H1 (cell line): ENCODE measurements at regions of chr15 and their contacts with region 1.

Region 1: GRCh38 chr15:51162865-51163762 is 68.4 kb upstream of the TNFAIP8L3 start:
- DNase-seq: peak; percentile 29 to 86
- H3K4me3 ChIP-seq: no peak overlapping the region
- H3K27ac ChIP-seq: no peak overlapping the region
- H3K4me1 ChIP-seq: peaks cover 0 to 8% (median under 1%) of the 10 kb centered on the region in 4 experiments; a peak in 3 of 7 replicates
- H3K27me3 ChIP-seq: 0 out of 7 replicates have a peak, but pooled peaks cover 0 to 2% (median 0%) of the 10 kb centered on the region in 4 experiments
- CTCF ChIP-seq: peak; percentile 84 to 88 (median 87)
- EP300 ChIP-seq: no peak
- POLR2A ChIP-seq: no peak
- RAD21 ChIP-seq: peak; percentile 81 to 87

Region 2: DNA sequence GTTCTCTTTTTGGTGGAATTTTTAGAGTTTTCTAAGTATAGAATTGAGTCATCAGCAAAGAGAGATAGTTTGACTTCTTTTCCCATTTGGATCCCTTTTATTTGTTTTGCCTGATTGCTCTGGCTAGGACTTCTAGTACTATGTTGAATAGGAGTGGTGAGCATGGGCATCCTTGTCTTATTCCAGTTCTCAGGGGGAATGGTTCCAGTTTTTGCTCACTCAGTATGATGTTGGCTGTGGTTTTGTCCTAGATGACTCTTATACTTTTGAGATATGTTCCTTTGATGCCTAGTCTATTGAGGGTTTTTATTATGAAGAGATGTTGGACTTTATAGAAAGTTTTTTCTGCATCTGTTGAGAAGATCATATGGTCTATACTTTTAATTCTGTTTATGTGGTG is 140.9 kb before region 1 on chr15:
- CTCF ChIA-PET with region 1: no interaction called
- POLR2A ChIA-PET with region 1: no interaction called
- DNase-seq: no peak
- H3K4me3 ChIP-seq: no peak overlapping the region
- H3K27ac ChIP-seq: no peak overlapping the region
- H3K4me1 ChIP-seq: no peaks in the 10 kb centered on the region
- H3K27me3 ChIP-seq: no peaks in the 10 kb centered on the region
- CTCF ChIP-seq: no peak
- EP300 ChIP-seq: no peak
- POLR2A ChIP-seq: no peak
- RAD21 ChIP-seq: no peak

Region 3: DNA sequence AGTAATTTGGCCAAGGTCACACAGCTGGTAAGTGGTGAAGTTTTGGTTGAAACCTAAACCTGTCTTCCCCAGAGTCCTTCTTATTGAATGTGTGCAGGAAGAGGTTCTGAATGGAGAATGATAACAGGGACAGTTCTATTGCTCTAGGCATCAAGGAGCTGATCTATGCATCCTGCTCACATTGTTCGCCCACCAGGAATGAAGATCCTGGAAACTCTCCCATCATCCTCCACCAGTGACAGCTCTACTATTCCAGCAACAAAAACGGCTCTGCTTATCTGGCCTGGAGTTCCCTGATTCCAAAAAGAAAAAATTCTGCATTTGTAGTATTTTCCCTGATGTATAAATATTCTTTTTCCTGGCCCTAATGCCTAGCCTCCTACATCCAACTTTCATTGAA is 52.1 kb before region 1 on chr15:
- CTCF ChIA-PET with region 1: no interaction called
- POLR2A ChIA-PET with region 1: no interaction called
- DNase-seq: no peak
- H3K4me3 ChIP-seq: no peak overlapping the region
- H3K27ac ChIP-seq: no peak overlapping the region
- H3K4me1 ChIP-seq: no peaks in the 10 kb centered on the region
- H3K27me3 ChIP-seq: no peaks in the 10 kb centered on the region
- CTCF ChIP-seq: no peak
- EP300 ChIP-seq: no peak
- POLR2A ChIP-seq: no peak
- RAD21 ChIP-seq: no peak

Region 4: GRCh38 chr15:51144021-51144532 is 19.0 kb before region 1 on chr15:
- CTCF ChIA-PET with region 1: interaction called, 58 read pairs
- POLR2A ChIA-PET with region 1: no interaction called
- DNase-seq: no peak
- H3K4me3 ChIP-seq: no peak overlapping the region
- H3K27ac ChIP-seq: no peak overlapping the region
- H3K4me1 ChIP-seq: no peaks in the 10 kb centered on the region
- H3K27me3 ChIP-seq: no peaks in the 10 kb centered on the region
- CTCF ChIP-seq: no peak
- EP300 ChIP-seq: no peak
- POLR2A ChIP-seq: no peak
- RAD21 ChIP-seq: no peak

Region 5: DNA sequence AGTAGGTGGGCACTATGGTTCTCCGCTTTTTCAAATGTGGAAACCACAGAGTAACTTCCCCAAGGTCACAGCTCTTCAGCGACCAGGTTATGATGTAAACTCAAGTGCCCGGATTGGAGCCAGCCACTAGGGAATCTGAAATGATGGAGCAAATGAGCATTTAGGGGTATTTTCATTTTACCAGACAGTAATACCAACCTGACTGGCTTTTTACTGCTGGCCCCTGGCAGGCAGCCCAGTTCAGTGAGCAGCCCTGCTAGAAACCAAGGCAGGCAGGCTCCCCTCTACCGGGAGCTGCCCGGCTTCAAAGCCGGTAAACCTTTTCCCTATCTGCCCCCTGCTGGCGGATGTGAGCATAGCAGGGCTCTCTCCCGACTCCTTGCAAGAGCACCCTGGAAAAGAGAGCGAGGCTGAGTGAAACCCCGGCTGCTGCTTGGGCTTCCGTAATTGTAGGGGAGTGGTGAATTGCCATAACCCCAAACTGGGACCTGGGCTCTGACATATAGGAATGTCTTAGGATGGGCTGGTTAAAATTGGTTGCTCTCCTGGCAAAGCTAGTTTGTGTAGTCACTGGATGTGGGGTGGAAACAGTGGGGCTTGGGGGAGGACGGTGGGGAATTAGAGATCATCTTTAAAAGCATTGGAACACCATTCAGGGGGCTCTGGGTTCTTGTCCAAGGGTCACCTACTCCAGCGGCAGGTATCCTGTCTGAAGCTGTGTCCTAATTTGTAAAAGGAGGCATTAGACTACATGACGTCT is 29.6 kb after region 1 on chr15:
- CTCF ChIA-PET with region 1: interaction called, 91 read pairs
- POLR2A ChIA-PET with region 1: no interaction called
- DNase-seq: peak; percentile 87 to 100
- H3K4me3 ChIP-seq: no peak overlapping the region
- H3K27ac ChIP-seq: no peak overlapping the region
- H3K4me1 ChIP-seq: no peaks in the 10 kb centered on the region
- H3K27me3 ChIP-seq: no peaks in the 10 kb centered on the region
- CTCF ChIP-seq: peak; percentile 80 to 92 (median 88)
- EP300 ChIP-seq: no peak
- POLR2A ChIP-seq: no peak
- RAD21 ChIP-seq: peak; percentile 78 to 81

Region 6: DNA sequence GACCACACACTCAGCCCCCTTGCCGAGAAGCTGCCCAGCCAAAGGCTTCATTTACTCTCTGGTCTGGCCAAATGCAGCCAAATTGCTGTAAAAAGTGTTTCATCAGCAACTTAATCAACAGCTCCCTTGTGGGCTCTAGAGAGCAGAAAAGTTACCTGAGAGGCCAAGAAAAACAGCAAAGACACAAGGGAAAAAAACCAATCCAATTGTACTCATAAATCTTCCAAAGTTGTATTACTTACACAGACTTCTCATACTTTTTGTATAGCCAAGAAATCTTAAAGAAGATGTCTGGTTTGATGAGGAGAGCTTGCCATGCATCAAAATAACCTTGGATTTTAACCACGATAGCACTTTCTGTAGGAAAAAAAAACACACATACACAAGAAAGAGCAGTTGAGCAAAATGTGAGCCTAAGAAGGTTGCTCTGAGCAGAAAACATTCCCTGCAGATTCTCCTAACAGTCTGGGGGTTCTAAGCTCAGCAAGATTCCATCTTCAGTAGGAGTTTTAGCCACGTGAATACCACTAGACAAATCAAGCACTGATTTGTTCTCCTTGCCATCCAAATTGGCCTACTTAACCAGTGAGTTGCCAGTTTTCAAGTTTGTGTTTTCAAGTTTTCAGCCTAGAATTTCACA is 55.3 kb after region 1 on chr15:
- CTCF ChIA-PET with region 1: interaction called, 12 read pairs
- POLR2A ChIA-PET with region 1: no interaction called
- DNase-seq: no peak
- H3K4me3 ChIP-seq: no peak overlapping the region
- H3K27ac ChIP-seq: no peak overlapping the region
- H3K4me1 ChIP-seq: no peaks in the 10 kb centered on the region
- H3K27me3 ChIP-seq: no peaks in the 10 kb centered on the region
- CTCF ChIP-seq: no peak
- EP300 ChIP-seq: no peak
- POLR2A ChIP-seq: no peak
- RAD21 ChIP-seq: no peak

Region 7: GRCh38 chr15:51286791-51287190 is 123.7 kb after region 1 on chr15:
- CTCF ChIA-PET with region 1: interaction called, 22 read pairs
- POLR2A ChIA-PET with region 1: no interaction called
- DNase-seq: no peak
- H3K4me3 ChIP-seq: no peak overlapping the region
- H3K27ac ChIP-seq: no peak overlapping the region
- H3K4me1 ChIP-seq: no peaks in the 10 kb centered on the region
- H3K27me3 ChIP-seq: no peaks in the 10 kb centered on the region
- CTCF ChIP-seq: peak; percentile 32 to 45 (median 34); a peak in 3 of 4 replicates
- EP300 ChIP-seq: no peak
- POLR2A ChIP-seq: no peak
- RAD21 ChIP-seq: peak; percentile 42 to 48; a peak in 3 of 4 replicates

Region 8: GRCh38 chr15:51401872-51402517 is 238.9 kb after region 1 on chr15:
- CTCF ChIA-PET with region 1: interaction called, 31 read pairs
- POLR2A ChIA-PET with region 1: no interaction called
- DNase-seq: peak in 1 of 2 experiments; percentile 86
- H3K4me3 ChIP-seq: no peak overlapping the region
- H3K27ac ChIP-seq: no peak overlapping the region
- H3K4me1 ChIP-seq: peaks cover 0 to 8% (median 0%) of the 10 kb centered on the region in 4 experiments; a peak in 2 of 7 replicates
- H3K27me3 ChIP-seq: no peaks in the 10 kb centered on the region
- CTCF ChIP-seq: peak; percentile 83 to 87 (median 84)
- EP300 ChIP-seq: no peak
- POLR2A ChIP-seq: no peak
- RAD21 ChIP-seq: peak; percentile 75 to 80